Naive thymus-derived CD4-positive, alpha-beta T cell (primary cell): ENCODE measurements at regions of chr19 and their contacts with region 1.

Region 1: GRCh38 chr19:13150187-13150930 is at the starts of genes IER2 and STX10:
- DNase-seq: peak; percentile 84 to 93 (median 92)
- ATAC-seq: peak; percentile 72
- H3K4me3 ChIP-seq: peak within 1 kb of the TSS; percentile 96
- H3K4me3 Mint-ChIP-seq: peak within 1 kb of the TSS; percentile 94 to 100 (median 98)
- H3K27ac ChIP-seq: peak within 1 kb of the TSS; percentile 96
- H3K27ac Mint-ChIP-seq: peak within 1 kb of the TSS; percentile 95 to 99 (median 97)
- H3K4me1 ChIP-seq: peaks cover 9 to 11% of the 10 kb centered on the region in 2 donors
- H3K4me1 Mint-ChIP-seq: peaks cover 6 to 42% (median 18%) of the 10 kb centered on the region in 7 donors
- H3K27me3 ChIP-seq: no peaks in the 10 kb centered on the region
- H3K27me3 Mint-ChIP-seq: peaks cover 0 to 17% (median 0%) of the 10 kb centered on the region in 5 donors
- total RNA-seq, gene IER2: 135 to 558 (median 246) TPM
- total RNA-seq, gene STX10: 42.6 to 76.2 (median 68.5) TPM

Region 2: GRCh38 chr19:11435058-11435832 is 1715.1 kb before region 1 on chr19 and contains the starts of genes ODAD3 and PRKCSH:
- CTCF ChIA-PET with region 1: no interaction called
- POLR2A ChIA-PET with region 1: no interaction called
- intact Hi-C with region 1: loop called in 1 of 2 experiments (anchors 2 kb)
- DNase-seq: peak; percentile 90 to 99 (median 97)
- ATAC-seq: peak; percentile 97
- H3K4me3 ChIP-seq: peak within 1 kb of the TSS; percentile 77
- H3K4me3 Mint-ChIP-seq: peak within 1 kb of the TSS; percentile 96 to 100 (median 99)
- H3K27ac ChIP-seq: peak within 1 kb of the TSS; percentile 77
- H3K27ac Mint-ChIP-seq: peak within 1 kb of the TSS; percentile 91 to 98 (median 97)
- H3K4me1 ChIP-seq: peaks cover 13 to 16% of the 10 kb centered on the region in 2 donors
- H3K4me1 Mint-ChIP-seq: peaks cover 10 to 34% (median 24%) of the 10 kb centered on the region in 7 donors
- H3K27me3 ChIP-seq: no peaks in the 10 kb centered on the region
- H3K27me3 Mint-ChIP-seq: peaks cover 0 to 8% (median 0%) of the 10 kb centered on the region in 5 donors
- total RNA-seq, gene ODAD3: not detected
- total RNA-seq, gene PRKCSH: 254 to 332 (median 288) TPM

Region 3: DNA sequence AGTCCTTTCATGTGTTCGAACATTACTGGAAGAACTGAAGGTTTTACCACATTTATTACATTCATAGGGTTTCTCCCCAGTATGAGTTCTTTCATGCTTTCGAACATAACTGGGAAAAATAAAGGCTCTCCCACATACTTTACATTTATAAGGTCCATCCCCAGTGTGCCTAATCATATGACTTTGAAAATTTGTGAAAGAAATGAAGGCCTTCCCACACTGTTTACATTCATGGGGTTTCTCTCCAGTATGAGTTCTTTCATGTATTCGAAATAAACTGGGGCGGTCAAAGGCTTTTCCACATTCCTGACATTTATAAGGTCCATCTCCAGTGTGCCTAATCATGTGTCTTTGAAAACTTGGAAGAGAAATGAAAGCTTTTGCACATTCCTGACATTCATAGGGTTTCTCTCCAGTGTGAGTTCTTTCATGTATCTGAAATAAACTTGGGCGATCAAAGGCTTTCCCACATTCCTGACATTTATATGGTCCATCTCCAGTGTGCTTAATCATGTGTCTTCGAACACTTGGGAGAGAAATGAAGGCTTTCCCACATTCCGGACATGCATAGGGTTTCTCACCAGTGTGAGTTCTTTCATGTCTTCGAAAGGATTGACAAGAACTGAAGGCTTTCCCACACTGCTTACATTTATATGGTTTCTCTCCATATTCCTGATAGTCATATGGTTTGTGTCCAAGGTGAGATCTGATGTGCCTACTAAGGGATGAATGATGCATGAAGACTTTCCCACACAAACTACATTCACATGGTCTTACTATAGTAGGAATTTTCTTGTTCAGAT is 623.1 kb before region 1 on chr19:
- CTCF ChIA-PET with region 1: no interaction called
- POLR2A ChIA-PET with region 1: no interaction called
- intact Hi-C with region 1: no loop called
- DNase-seq: peak in 5 of 9 donors; percentile 11 to 31 (median 15)
- ATAC-seq: no peak
- H3K4me3 ChIP-seq: no peak overlapping the region
- H3K4me3 Mint-ChIP-seq: peak overlapping the region in 3 of 10 donors; percentile 13 to 28 (median 21)
- H3K27ac ChIP-seq: no peak overlapping the region
- H3K27ac Mint-ChIP-seq: peak overlapping the region in 3 of 9 donors; percentile 19 to 69 (median 29)
- H3K4me1 ChIP-seq: no peaks in the 10 kb centered on the region
- H3K4me1 Mint-ChIP-seq: peaks cover 0 to 4% (median 0%) of the 10 kb centered on the region in 7 donors
- H3K27me3 ChIP-seq: no peaks in the 10 kb centered on the region
- H3K27me3 Mint-ChIP-seq: no peaks in the 10 kb centered on the region

Region 4: GRCh38 chr19:12789904-12790619 is 360.3 kb before region 1 on chr19:
- CTCF ChIA-PET with region 1: no interaction called
- POLR2A ChIA-PET with region 1: interaction called, 15 read pairs
- intact Hi-C with region 1: loop called (anchors 2 to 5 kb)
- DNase-seq: peak; percentile 80 to 97 (median 83)
- ATAC-seq: peak; percentile 48
- H3K4me3 ChIP-seq: peak overlapping the region; percentile 98
- H3K4me3 Mint-ChIP-seq: peak overlapping the region; percentile 89 to 98 (median 94)
- H3K27ac ChIP-seq: peak overlapping the region; percentile 99
- H3K27ac Mint-ChIP-seq: peak overlapping the region; percentile 97 to 100 (median 100)
- H3K4me1 ChIP-seq: peaks cover 42% of the 10 kb centered on the region in 2 donors
- H3K4me1 Mint-ChIP-seq: peaks cover 19 to 37% (median 30%) of the 10 kb centered on the region in 7 donors
- H3K27me3 ChIP-seq: no peaks in the 10 kb centered on the region
- H3K27me3 Mint-ChIP-seq: peaks cover 0 to 2% (median 0%) of the 10 kb centered on the region in 5 donors

Region 5: DNA sequence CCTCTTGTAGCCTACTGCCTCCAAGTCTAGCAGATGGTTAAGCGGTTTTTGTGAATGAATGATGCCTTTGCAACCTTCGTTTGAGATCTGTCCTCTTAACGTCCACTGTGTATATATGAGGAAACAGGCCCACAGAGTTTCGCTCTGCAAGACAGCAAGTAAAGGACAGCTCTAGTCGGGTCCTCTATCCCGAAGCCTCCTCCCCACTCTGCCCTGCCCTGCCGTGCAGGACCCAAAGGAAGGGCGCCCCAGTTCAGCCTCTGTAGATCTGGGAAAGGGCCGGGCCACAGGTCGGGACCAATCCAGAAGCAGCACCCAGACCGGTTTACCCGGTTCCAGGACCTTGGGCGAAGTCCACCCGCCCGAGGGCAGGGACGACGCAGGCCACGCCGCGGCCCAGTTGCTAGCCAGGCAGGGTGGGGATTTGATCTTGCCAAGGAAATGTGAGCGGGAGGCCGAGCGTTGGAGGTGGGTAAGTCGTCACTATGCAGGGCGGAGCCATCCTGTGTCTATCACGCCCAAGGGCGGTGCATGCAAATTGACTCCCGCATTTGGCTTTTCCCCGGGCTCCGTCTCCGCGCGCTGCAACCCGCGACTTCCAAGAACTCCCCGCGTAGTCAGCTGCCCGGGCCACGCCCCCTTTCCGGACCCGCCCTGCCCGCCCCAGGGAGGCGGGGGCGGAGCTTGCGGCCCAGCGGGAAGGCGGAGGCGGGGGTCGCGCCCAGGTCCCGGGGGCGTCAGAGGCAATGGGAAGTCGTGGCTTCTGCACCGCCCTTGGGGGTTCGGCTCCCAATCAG is 12.4 kb after region 1 on chr19:
- CTCF ChIA-PET with region 1: interaction called, 17 read pairs
- POLR2A ChIA-PET with region 1: interaction called, 283 read pairs
- intact Hi-C with region 1: loop called (anchors 1 kb)
- DNase-seq: peak; percentile 46 to 91 (median 75)
- ATAC-seq: peak; percentile 73
- H3K4me3 ChIP-seq: peak overlapping the region; percentile 60
- H3K4me3 Mint-ChIP-seq: peak overlapping the region; percentile 85 to 94 (median 90)
- H3K27ac ChIP-seq: peak overlapping the region; percentile 90
- H3K27ac Mint-ChIP-seq: peak overlapping the region; percentile 92 to 99 (median 97)
- H3K4me1 ChIP-seq: peaks cover 54 to 73% of the 10 kb centered on the region in 2 donors
- H3K4me1 Mint-ChIP-seq: peaks cover 26 to 87% (median 67%) of the 10 kb centered on the region in 7 donors
- H3K27me3 ChIP-seq: no peaks in the 10 kb centered on the region
- H3K27me3 Mint-ChIP-seq: no peaks in the 10 kb centered on the region

Region 6: DNA sequence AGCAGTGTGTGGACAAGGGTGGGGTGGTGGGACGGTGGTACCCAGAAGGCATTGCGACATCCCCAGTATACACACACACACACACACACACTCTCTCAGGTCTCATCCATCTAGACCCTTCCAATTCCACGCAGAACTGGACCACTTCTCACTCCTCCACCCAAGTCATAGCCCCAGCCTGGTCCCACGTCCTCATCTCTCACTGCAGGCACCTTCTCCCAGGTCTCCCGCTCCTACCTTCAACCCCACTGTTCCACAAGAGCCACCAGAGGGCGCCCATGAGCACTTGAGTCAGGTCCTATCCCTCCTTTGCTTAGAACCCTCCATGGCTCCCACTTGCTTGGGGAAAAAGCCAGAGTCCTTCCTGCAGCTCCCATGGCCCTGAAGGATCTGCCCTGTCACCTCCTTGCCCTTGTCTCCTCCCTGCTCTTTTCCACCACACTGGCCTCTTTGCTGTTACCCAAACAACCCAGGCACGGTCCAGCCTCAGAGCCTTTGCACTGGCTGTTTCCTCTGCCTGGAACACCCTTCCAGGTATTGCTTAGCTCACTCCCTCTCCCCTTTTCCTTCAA is 62.5 kb after region 1 on chr19:
- CTCF ChIA-PET with region 1: interaction called, 8 read pairs
- POLR2A ChIA-PET with region 1: interaction called, 35 read pairs
- intact Hi-C with region 1: loop called (anchors 1 kb)
- DNase-seq: peak; percentile 47 to 72 (median 69)
- ATAC-seq: peak; percentile 58
- H3K4me3 ChIP-seq: no peak overlapping the region
- H3K4me3 Mint-ChIP-seq: peak overlapping the region in 6 of 10 donors; percentile 2 to 41 (median 20)
- H3K27ac ChIP-seq: no peak overlapping the region
- H3K27ac Mint-ChIP-seq: peak overlapping the region; percentile 5 to 85 (median 65)
- H3K4me1 ChIP-seq: peaks cover 0 to 6% of the 10 kb centered on the region in 2 donors
- H3K4me1 Mint-ChIP-seq: peaks cover 14 to 31% (median 26%) of the 10 kb centered on the region in 7 donors
- H3K27me3 ChIP-seq: no peaks in the 10 kb centered on the region
- H3K27me3 Mint-ChIP-seq: no peaks in the 10 kb centered on the region

Region 7: DNA sequence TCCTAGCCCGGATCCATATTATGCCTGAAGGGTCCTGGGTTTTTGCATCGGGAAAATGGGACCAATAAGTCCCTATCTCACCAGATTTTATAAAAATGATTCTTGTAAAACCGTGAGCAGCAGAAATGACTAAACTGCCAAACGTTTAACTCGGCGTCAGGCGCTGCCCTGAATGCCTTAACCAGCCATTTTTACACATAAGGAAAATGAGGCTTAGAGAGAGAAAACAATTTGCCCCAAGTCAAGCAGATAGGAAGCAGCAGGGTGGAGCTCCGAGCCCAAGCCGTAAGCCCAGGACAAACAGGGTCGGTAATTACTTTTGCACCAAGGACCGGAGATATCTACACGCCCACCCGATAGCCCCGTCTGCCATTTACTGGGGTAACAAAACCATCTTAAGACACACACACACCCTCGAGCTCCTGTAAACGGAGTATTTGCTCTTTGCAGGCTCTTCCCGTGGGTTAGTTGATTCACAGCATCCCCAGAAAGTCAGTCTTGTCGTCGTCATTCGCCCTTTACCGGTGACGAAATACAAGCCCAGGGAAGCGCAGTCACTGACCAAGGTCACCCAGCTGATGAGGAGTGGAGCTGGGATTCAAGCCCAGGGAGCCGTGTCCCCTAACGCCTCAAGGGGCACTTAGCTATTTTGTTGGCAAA is 597.9 kb after region 1 on chr19:
- CTCF ChIA-PET with region 1: no interaction called
- POLR2A ChIA-PET with region 1: interaction called, 3 read pairs
- intact Hi-C with region 1: loop called in 1 of 2 experiments (anchors 1 kb)
- DNase-seq: peak in 1 of 9 donors; percentile 27
- ATAC-seq: no peak
- H3K4me3 ChIP-seq: peak overlapping the region; percentile 72
- H3K4me3 Mint-ChIP-seq: peak overlapping the region; percentile 84 to 96 (median 90)
- H3K27ac ChIP-seq: peak overlapping the region; percentile 99
- H3K27ac Mint-ChIP-seq: peak overlapping the region; percentile 80 to 97 (median 94)
- H3K4me1 ChIP-seq: peaks cover 10 to 17% of the 10 kb centered on the region in 2 donors
- H3K4me1 Mint-ChIP-seq: peaks cover 15 to 46% (median 28%) of the 10 kb centered on the region in 7 donors
- H3K27me3 ChIP-seq: no peaks in the 10 kb centered on the region
- H3K27me3 Mint-ChIP-seq: no peaks in the 10 kb centered on the region

Region 8: DNA sequence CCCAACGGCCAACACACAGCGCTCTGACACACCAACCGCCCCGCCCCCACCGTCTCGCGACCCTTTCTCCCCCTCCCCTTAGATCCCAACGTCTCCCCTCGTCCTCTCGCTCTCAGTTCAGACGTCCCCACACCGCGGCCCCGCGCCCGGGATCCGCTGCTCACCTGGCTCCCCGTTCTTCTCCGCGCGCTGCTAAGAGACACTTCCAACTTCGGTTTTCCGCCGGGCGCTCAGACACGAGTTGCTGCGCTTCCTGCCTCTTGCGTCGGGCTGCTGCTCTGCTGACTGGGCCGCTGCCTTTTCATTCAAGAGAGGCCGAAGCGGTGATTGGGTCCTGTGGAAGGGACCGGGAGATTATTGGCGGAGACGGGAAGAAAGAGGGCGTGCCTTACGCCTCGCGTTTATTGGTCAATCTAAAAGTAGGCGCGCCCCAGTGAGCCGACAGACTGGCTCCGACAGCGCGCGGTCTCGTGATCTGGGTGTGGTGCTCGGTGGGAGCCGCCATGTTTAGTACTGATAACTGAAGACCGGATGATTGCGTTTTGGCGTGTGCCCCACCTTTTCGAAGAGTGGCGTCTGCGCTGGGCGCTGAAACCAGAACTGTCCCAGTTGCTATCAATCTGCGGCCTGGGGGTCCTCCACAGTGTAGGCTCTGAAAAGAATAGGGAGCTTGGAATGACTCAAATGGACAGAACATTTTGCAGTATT is 1268.9 kb after region 1 on chr19 and contains the start of gene DDX39A:
- CTCF ChIA-PET with region 1: no interaction called
- POLR2A ChIA-PET with region 1: no interaction called
- intact Hi-C with region 1: loop called in 1 of 2 experiments (anchors 2 kb)
- DNase-seq: peak; percentile 80 to 99 (median 98)
- ATAC-seq: peak; percentile 90
- H3K4me3 ChIP-seq: peak within 1 kb of the TSS; percentile 87
- H3K4me3 Mint-ChIP-seq: peak within 1 kb of the TSS; percentile 83 to 97 (median 92)
- H3K27ac ChIP-seq: peak within 1 kb of the TSS; percentile 92
- H3K27ac Mint-ChIP-seq: peak within 1 kb of the TSS; percentile 90 to 97 (median 95)
- H3K4me1 ChIP-seq: peaks cover 24 to 29% of the 10 kb centered on the region in 2 donors
- H3K4me1 Mint-ChIP-seq: peaks cover 23 to 49% (median 38%) of the 10 kb centered on the region in 7 donors
- H3K27me3 ChIP-seq: no peaks in the 10 kb centered on the region
- H3K27me3 Mint-ChIP-seq: peaks cover 0 to 2% (median 0%) of the 10 kb centered on the region in 5 donors
- total RNA-seq, gene DDX39A: 135 to 288 (median 215) TPM